ENCODE measurements at regions of chr17 and their contacts with region 1.

Region 1: GRCh38 chr17:81553018-81553615 is 964 bp upstream of the FAAP100 start:
- DNase-seq: peak; percentile 78 to 85
- H3K4me3 ChIP-seq: peak overlapping the region; percentile 62
- H3K27ac ChIP-seq: 0 out of 2 replicates have a peak overlapping the region, but pooled peaks have one; percentile 16
- H3K4me1 ChIP-seq: peaks cover 10% of the 10 kb centered on the region
- H3K27me3 ChIP-seq: no peaks in the 10 kb centered on the region
- CTCF ChIP-seq: no peak

Region 2: GRCh38 chr17:81500047-81500446 is 53.1 kb before region 1 on chr17:
- CTCF ChIA-PET with region 1: no interaction called
- POLR2A ChIA-PET with region 1: no interaction called
- intact Hi-C with region 1: no loop called
- DNase-seq: peak in 1 of 2 experiments; percentile 49
- H3K4me3 ChIP-seq: no peak overlapping the region
- H3K27ac ChIP-seq: no peak overlapping the region
- H3K4me1 ChIP-seq: no peaks in the 10 kb centered on the region
- H3K27me3 ChIP-seq: no peaks in the 10 kb centered on the region
- CTCF ChIP-seq: no peak

Region 3: GRCh38 chr17:81566461-81567126 is 13.5 kb after region 1 on chr17:
- CTCF ChIA-PET with region 1: interaction called, 14 read pairs
- POLR2A ChIA-PET with region 1: interaction called, 24 read pairs
- intact Hi-C with region 1: no loop called
- DNase-seq: peak; percentile 74 to 81
- H3K4me3 ChIP-seq: peak overlapping the region; percentile 34; the same call in 1 of the 2 replicates
- H3K27ac ChIP-seq: peak overlapping the region; percentile 63
- H3K4me1 ChIP-seq: peaks cover 47% of the 10 kb centered on the region
- H3K27me3 ChIP-seq: no peaks in the 10 kb centered on the region
- CTCF ChIP-seq: no peak

Region 4: GRCh38 chr17:81576621-81577277 is 23.6 kb after region 1 on chr17:
- CTCF ChIA-PET with region 1: no interaction called
- POLR2A ChIA-PET with region 1: no interaction called
- intact Hi-C with region 1: loop called (anchors 1 kb)
- DNase-seq: peak; percentile 79 to 84
- H3K4me3 ChIP-seq: peak overlapping the region; percentile 40; the same call in 1 of the 2 replicates
- H3K27ac ChIP-seq: peak overlapping the region; percentile 64
- H3K4me1 ChIP-seq: peaks cover 33% of the 10 kb centered on the region
- H3K27me3 ChIP-seq: no peaks in the 10 kb centered on the region
- CTCF ChIP-seq: no peak

Region 5: DNA sequence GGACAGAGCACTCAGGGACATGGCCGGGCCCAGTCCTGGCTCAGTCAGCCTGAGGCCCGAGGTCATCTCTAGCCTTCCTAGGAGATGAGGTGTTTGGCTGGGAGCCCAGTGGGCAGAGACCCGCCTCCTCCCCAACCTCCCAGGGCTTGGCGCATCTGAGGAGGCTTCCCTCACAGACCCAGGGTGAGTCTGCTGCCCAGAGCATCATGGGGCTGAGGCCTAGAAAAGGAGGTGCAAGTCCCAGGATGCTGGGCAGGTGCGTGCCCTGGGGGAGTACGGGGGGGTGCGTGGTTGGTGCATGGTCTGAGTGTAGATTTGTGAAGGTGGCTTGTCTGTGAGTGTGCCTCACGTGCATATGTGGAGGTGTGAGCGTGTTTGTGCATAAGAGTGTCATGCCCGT is 98.6 kb after region 1 on chr17:
- CTCF ChIA-PET with region 1: no interaction called
- POLR2A ChIA-PET with region 1: no interaction called
- intact Hi-C with region 1: no loop called
- DNase-seq: peak; percentile 70 to 89
- H3K4me3 ChIP-seq: no peak overlapping the region
- H3K27ac ChIP-seq: no peak overlapping the region
- H3K4me1 ChIP-seq: no peaks in the 10 kb centered on the region
- H3K27me3 ChIP-seq: no peaks in the 10 kb centered on the region
- CTCF ChIP-seq: no peak

Region 6: DNA sequence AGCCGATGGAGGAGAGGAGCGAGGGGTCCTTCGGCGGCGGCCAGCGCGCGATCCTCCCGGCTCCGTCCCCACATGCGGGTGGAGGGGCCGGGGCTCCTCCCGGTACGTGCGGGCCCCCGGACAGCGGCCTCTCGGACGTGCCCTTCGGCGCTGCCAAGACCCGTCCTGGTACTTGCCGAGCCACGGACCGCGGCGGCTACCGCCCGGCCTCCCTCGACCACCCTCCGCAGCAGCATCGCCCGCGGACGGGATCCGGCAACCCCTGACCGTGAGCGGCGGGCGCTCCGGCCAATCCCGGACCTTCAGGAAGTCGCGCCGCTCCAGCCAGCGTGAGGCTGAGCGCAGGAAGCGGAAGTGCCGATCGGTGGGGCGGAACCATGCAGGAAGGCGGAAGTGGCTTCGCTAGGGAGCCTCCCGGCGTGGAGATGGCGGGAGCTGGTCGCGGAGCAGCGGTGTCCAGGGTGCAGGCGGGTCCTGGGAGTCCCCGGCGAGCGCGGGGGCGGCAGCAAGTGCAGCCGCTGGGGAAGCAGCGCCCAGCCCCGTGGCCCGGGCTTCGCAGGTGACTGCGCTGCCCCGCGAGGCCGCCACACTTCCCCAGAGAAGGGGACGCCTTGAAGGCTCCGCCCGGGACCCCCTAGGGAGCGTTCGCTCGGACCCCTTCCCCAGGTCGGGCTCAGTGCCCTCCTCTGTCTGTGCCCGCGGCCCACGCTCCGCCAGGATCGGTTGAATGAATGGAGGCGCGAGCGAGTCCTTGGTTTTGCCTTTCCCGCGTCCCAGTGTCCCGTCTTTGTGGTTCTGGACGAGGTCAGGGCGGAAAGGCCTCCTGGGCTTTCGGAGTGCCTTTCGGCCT is 113.5 kb after region 1 on chr17 and contains the starts of genes CCDC137 and OXLD1:
- CTCF ChIA-PET with region 1: no interaction called
- POLR2A ChIA-PET with region 1: no interaction called
- intact Hi-C with region 1: no loop called
- DNase-seq: peak; percentile 81 to 96
- H3K4me3 ChIP-seq: peak within 1 kb of the TSS; percentile 86
- H3K27ac ChIP-seq: peak within 1 kb of the TSS; percentile 19; the same call in 1 of the 2 replicates
- H3K4me1 ChIP-seq: peaks cover 10% of the 10 kb centered on the region
- H3K27me3 ChIP-seq: no peaks in the 10 kb centered on the region
- CTCF ChIP-seq: no peak
- total RNA-seq, gene CCDC137: 29.3 and 30.0 TPM in 2 replicates
- total RNA-seq, gene OXLD1: 40.2 and 66.0 TPM in 2 replicates